GM18951 (cell line): ENCODE measurements at regions of chr3 and their contacts with region 1.

Region 1: GRCh38 chr3:130759699-130760338 is 13.2 kb upstream of the PIK3R4 start:
- POLR2A ChIP-seq: no peak

Region 2: DNA sequence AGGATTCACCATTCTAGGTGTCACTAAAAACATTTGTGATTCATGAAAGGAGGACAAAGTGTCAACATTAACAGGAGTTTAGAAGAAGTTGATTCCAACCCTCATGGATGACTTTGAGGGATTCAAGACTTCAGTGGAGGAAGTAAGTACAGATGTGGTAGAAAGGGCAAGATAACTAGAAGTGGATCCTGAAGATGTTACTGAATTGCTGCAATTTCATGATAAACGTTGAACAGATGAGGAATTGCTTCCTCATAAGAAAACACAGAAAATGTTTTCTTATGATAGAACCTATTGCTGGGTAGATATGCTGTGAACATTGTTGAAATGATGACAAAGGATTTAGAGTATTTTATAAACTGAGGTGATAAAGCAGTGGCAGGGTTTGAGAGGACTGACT is 110.6 kb after region 1 on chr3:
- in situ Hi-C with region 1: no loop called
- POLR2A ChIP-seq: no peak

Region 3: DNA sequence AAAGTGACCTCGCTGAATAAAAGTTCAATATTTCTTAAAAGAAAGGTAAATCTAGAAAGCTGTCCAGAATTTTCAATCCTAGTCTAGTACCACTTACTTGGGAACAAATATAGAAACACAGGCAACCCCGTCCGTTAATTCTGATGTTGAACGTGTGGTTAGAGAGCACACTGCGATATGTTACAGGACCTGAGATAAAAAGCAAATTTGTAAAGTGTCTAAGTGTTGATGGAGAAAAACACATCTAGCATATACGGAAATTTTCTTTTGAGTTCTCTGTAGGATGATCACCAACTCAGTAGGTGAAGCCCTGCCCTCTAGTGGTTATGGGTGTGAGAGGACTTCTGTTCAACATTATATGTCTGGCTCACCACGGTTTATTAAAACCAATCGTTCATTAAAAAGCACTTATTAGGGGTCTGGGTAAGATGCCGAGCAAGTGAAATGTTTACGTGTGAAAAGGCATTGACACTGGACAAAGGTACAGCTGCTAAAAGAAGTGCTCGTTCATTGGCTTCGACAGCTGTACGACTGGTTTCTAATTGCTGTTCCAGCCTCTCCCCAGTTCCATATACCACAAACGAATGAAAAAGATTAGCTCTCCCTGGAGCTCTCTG is 133.0 kb after region 1 on chr3:
- in situ Hi-C with region 1: loop called (anchors 5 kb)
- POLR2A ChIP-seq: no peak